ENCODE measurements at regions of chr17 and their contacts with region 1.

Region 1: DNA sequence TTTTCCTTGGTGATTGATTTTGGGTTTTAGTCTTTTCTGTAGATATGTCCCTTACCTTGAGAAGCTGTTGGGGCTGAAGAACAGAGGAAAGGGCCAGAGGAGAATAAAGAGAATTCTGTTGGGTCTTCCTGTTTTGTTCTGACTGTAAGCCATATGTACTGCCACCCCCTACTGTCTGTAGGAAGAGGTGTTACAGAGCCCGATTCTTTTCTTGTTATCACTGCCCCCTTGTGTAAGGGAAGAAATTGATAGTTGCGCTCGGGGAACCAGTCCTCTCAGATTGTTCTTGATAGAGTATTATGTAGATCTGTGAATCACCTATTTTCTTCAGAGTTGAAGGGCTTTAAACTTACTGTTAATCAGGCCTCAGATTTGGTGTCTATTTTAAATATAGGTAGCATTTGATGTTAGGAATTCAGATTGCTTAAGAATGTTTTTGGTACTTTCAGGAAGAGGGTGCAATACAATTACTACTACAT is 2.4 kb downstream of the TANC2 start:
- DNase-seq: no peak
- ATAC-seq: peak; percentile 68 to 69
- H3K4me3 ChIP-seq: no peak overlapping the region
- H3K27ac ChIP-seq: no peak overlapping the region
- H3K4me1 ChIP-seq: no peaks in the 10 kb centered on the region
- H3K27me3 ChIP-seq: no peaks in the 10 kb centered on the region

Region 2: GRCh38 chr17:62703775-62704378 is 264.6 kb before region 1 on chr17:
- intact Hi-C with region 1: loop called (anchors 2 to 5 kb)
- DNase-seq: peak; percentile 77 to 91 (median 90)
- ATAC-seq: peak; percentile 81 to 91
- H3K4me3 ChIP-seq: peak overlapping the region; percentile 81
- H3K27ac ChIP-seq: no peak overlapping the region
- H3K4me1 ChIP-seq: no peaks in the 10 kb centered on the region
- H3K27me3 ChIP-seq: no peaks in the 10 kb centered on the region

Measured in right cardiac atrium (tissue), 5 donors.